ENCODE measurements at regions of chr3 and their contacts with region 1.

Region 1: DNA sequence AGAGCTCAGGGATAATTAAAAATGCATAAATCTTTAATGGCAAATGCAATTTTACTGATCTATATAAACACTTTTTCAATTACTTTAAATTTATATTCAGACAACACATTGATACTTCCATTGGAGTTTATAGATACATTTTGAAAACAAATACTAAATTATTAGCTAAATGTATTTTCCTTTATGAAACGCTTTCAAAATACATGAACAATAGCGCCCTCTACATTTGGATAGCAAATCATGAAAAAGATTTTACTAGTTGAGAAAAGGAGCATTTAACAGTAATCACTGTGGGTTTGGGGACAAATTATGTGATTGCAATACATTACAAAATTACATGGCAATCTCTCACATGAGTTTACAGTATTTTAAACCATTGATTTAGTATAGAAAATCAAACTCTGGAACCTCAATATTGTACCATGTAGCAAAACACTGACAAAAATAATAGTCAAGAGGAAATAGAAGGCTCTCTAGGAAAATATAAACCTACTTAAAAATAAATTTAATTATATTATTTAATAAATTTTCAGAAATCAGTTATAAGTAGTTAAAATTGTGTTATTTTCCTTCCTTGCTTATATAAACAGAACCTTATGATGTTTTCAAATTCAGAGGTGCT is 207.9 kb downstream of the ZIC1 start:
- DNase-seq: no peak
- H3K4me3 ChIP-seq: no peak overlapping the region
- H3K27ac ChIP-seq: no peak overlapping the region
- H3K27me3 ChIP-seq: no peaks in the 10 kb centered on the region
- CTCF ChIP-seq: peak; percentile 52

Region 2: DNA sequence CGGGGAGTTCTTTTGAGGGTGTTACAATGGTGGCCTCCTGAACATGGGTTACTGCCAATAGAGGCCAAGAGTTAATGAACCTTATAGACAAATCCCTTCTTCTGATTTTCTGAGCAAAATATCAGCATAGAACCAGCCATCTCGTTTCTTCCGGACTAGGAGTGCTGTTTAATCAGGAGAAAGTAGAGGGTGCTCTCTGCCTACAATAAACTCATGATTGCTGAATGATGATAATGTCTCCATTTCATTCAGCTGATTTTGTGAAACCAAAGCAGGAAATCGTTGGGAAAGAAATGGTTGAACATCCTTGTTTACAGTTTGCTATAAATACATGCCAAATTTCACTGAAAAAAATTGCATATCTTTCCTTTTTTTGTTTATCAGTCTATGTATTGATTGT is 869.2 kb before region 1 on chr3:
- CTCF ChIA-PET with region 1: interaction called, 10 read pairs
- POLR2A ChIA-PET with region 1: no interaction called
- DNase-seq: peak; percentile 0
- H3K4me3 ChIP-seq: no peak overlapping the region
- H3K27ac ChIP-seq: no peak overlapping the region
- H3K27me3 ChIP-seq: no peaks in the 10 kb centered on the region
- CTCF ChIP-seq: peak; percentile 56

Region 3: DNA sequence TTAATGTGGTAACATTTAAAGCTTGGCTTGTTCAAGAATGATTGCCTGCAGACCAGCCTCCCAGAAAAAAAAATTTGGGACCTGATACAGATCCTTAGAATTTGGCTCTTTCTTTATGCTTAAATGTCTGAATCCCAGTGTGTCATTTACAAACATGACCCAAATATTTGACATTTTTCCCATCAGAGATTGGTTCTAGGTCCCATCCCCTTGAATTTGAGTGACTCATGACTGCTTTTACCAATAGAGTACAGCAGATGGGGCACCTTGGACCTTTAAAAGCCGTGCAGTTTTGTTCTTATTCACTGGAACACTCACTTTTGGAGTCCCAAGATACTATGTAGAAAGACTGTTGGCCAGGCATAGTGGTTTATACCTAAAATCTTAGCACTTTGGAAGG is 23.7 kb after region 1 on chr3:
- CTCF ChIA-PET with region 1: no interaction called
- POLR2A ChIA-PET with region 1: no interaction called
- DNase-seq: no peak
- H3K4me3 ChIP-seq: no peak overlapping the region
- H3K27ac ChIP-seq: no peak overlapping the region
- H3K27me3 ChIP-seq: no peaks in the 10 kb centered on the region
- CTCF ChIP-seq: no peak

Region 4: DNA sequence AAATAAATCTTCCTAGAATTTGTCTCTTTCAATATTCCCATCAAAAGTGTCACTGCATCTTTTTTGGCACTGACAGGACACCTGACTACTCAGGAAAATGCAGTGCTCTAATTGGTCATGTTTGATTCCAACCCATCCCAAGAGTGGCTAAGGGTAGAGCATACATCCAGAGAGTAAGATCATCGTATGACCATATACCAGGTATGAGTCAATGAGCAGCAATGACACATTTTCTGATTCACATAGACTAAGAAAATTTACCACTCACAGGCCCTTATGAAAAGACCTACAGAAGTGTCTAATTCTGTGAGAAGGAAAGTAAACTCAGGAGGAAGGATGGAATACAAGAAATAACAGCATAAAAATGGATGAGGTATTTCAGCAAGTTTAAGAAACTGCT is 226.2 kb after region 1 on chr3:
- CTCF ChIA-PET with region 1: no interaction called
- POLR2A ChIA-PET with region 1: no interaction called
- DNase-seq: no peak
- H3K4me3 ChIP-seq: no peak overlapping the region
- H3K27ac ChIP-seq: no peak overlapping the region
- H3K27me3 ChIP-seq: no peaks in the 10 kb centered on the region
- CTCF ChIP-seq: no peak